Breast epithelium (tissue), 4 donors: ENCODE measurements at regions of chr11 and their contacts with region 1.

Region 1: DNA sequence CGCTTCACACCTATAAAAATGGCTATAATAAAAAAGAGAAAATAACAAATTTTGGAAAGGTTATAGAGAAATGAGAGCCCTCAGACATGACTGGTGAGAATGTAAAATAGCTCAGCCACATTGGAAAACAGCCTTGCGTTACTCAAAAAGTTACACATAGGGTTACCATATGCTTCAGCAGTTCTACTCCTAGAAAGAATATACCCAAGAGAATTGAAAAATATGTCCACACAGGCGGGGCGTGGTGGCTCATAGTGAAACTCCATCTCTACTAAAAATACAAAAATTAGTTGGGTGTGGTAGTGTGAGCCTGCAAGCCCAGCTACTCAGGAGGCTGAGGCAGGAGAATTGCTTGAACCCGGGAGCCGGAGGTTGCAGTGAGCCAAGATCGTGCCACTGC is 7.6 kb upstream of the JHY start:
- DNase-seq: no peak
- H3K4me3 ChIP-seq: no peak overlapping the region
- H3K27ac ChIP-seq: no peak overlapping the region
- H3K4me1 ChIP-seq: no peaks in the 10 kb centered on the region
- H3K27me3 ChIP-seq: no peaks in the 10 kb centered on the region
- CTCF ChIP-seq: no peak
- POLR2A ChIP-seq: no peak

Region 2: DNA sequence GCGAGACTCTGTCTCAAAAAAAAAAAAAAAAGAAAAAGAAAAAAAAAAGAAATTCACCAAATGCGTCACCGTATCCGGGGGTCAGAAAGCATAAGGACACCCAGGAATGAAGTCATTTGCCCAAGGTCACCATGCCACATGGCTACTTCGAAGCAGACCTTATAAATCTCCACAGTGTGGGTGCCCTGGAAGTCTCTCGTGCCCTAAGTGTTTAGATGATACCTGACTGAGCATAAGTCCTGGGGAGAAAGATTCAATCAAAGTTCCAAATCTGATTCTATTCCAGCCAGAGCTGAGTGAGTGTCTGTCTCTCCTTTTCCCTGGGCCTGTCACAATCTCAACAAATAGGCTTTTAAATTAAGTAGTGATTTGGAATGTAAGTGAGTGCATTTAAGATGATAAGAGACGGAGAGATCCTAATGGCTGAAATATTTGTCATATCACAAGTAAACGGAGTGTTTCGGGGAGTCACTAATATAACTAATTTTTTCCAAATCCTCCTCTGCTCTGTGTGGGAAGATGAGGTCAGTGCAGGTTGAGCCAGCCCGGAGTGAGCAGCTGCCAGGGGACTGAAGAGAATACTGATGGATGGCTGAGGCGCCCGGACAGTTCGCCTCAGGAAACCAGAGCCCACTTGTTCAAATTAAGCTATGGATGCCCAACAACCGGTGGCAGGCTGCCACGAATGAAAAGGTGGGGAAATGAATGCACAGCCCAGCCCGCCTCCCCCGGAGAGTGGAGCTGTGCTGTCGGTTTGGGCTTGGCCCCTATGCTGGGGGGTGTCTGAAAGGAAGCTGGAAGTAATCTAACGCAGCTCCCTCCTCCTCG is 164.8 kb after region 1 on chr11:
- intact Hi-C with region 1: loop called (anchors 5 kb)
- DNase-seq: no peak
- H3K4me3 ChIP-seq: no peak overlapping the region
- H3K27ac ChIP-seq: no peak overlapping the region
- H3K4me1 ChIP-seq: no peaks in the 10 kb centered on the region
- H3K27me3 ChIP-seq: no peaks in the 10 kb centered on the region
- CTCF ChIP-seq: no peak
- POLR2A ChIP-seq: no peak